ENCODE measurements at regions of chr6 and their contacts with region 1.

Region 1: GRCh38 chr6:166950443-166950821 is 5.9 kb downstream of the RNASET2 start:
- DNase-seq: no peak
- ATAC-seq: no peak
- H3K4me3 ChIP-seq: no peak overlapping the region
- H3K27ac ChIP-seq: peak overlapping the region; percentile 75; the same call in 2 of the 3 replicates
- H3K4me1 ChIP-seq: peaks cover 20 to 25% of the 10 kb centered on the region in 2 experiments
- H3K27me3 ChIP-seq: no peaks in the 10 kb centered on the region
- CTCF ChIP-seq: no peak
- EP300 ChIP-seq: no peak
- POLR2A ChIP-seq: no peak
- RAD21 ChIP-seq: no peak

Region 2: DNA sequence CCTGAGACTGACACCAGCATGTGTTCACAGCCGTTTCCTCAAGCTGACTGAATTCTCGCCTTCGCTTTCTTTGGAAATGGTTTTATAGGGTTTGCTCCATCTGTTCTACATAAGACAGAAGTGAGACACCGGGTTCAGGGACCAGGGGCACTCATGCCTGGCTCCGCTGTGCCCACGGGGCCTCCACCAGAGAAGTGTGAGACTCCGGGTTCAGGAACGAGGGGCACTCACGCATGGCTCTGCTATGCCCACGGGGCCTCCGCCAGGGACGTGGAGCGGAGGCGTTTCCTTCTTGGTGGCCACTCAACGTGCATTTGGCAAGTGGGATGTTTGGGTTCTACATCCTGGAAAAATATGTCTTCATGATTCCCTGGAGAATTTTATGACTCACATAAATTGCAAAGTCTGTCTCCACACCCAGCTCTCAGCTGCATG is 100.7 kb before region 1 on chr6:
- CTCF ChIA-PET with region 1: no interaction called
- POLR2A ChIA-PET with region 1: no interaction called
- in situ Hi-C with region 1: no loop called
- intact Hi-C with region 1: loop called (anchors 2 kb)
- DNase-seq: no peak
- ATAC-seq: no peak
- H3K4me3 ChIP-seq: no peak overlapping the region
- H3K27ac ChIP-seq: no peak overlapping the region
- H3K4me1 ChIP-seq: peaks cover 11 to 21% of the 10 kb centered on the region in 2 experiments
- H3K27me3 ChIP-seq: peaks cover 2 to 32% of the 10 kb centered on the region in 2 experiments; a peak in 2 of 5 replicates
- CTCF ChIP-seq: no peak
- EP300 ChIP-seq: no peak
- POLR2A ChIP-seq: no peak
- RAD21 ChIP-seq: no peak

Region 3: GRCh38 chr6:166866839-166867637 is 83.4 kb before region 1 on chr6:
- CTCF ChIA-PET with region 1: no interaction called
- POLR2A ChIA-PET with region 1: no interaction called
- in situ Hi-C with region 1: no loop called
- intact Hi-C with region 1: no loop called
- DNase-seq: no peak
- ATAC-seq: no peak
- H3K4me3 ChIP-seq: no peak overlapping the region
- H3K27ac ChIP-seq: no peak overlapping the region
- H3K4me1 ChIP-seq: peaks cover 0 to 11% of the 10 kb centered on the region in 2 experiments; a peak in 2 of 5 replicates
- H3K27me3 ChIP-seq: peaks cover 17 to 40% of the 10 kb centered on the region in 2 experiments; a peak in 4 of 5 replicates
- CTCF ChIP-seq: no peak
- EP300 ChIP-seq: no peak
- POLR2A ChIP-seq: no peak
- RAD21 ChIP-seq: no peak

Region 4: GRCh38 chr6:167141667-167142432 is 191.4 kb after region 1 on chr6:
- CTCF ChIA-PET with region 1: no interaction called
- POLR2A ChIA-PET with region 1: no interaction called
- in situ Hi-C with region 1: no loop called
- intact Hi-C with region 1: loop called (anchors 1 kb)
- DNase-seq: peak; percentile 32 to 60 (median 44)
- ATAC-seq: peak; percentile 96
- H3K4me3 ChIP-seq: no peak overlapping the region
- H3K27ac ChIP-seq: no peak overlapping the region
- H3K4me1 ChIP-seq: no peaks in the 10 kb centered on the region
- H3K27me3 ChIP-seq: peaks cover 28 to 64% of the 10 kb centered on the region in 2 experiments
- CTCF ChIP-seq: peak; percentile 84 to 89 (median 85)
- EP300 ChIP-seq: no peak
- POLR2A ChIP-seq: no peak
- RAD21 ChIP-seq: peak; percentile 86 to 95

Measured in K562 (cell line).